GM12878 (cell line): ENCODE measurements at regions of chr1 and their contacts with region 1.

Region 1: DNA sequence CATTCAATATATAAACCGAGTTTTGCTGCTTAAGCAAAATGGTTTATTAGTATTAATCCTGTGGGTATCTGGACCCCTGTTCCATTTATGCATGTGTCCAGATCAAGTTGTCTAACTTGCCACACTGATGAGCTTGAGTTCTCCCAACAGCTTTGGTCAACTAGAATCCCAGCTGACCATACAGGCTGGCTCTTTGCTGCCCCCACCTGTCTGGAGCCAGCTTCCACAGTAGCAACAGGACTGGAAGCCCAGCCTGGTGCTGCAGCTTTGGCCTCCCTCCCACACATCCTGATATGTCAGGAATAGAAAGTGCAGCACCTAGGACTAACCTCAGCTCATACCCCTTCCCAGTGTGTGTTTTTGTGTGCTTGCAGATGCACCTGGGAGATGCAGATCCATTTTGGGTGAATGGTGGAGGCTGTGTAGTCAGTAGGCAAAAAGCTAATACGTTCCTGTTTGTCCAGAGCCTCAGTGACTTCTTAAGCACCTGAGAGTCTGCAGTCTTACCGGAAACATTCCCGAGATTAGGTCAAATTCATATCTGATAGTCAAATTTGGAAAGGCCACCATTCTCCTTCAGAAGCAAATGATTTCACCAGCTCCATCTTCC is 40.9 kb upstream of the BEND5 start:
- DNase-seq: no peak
- ATAC-seq: peak; percentile 83
- H3K4me3 ChIP-seq: no peak overlapping the region
- H3K27ac ChIP-seq: no peak overlapping the region
- H3K4me1 ChIP-seq: no peaks in the 10 kb centered on the region
- H3K27me3 ChIP-seq: no peaks in the 10 kb centered on the region
- CTCF ChIP-seq: peak; percentile 66 to 78 (median 77)
- EP300 ChIP-seq: no peak
- POLR2A ChIP-seq: no peak
- RAD21 ChIP-seq: peak; percentile 81

Region 2: GRCh38 chr1:48563021-48563420 is 254.6 kb before region 1 on chr1:
- CTCF ChIA-PET with region 1: no interaction called
- POLR2A ChIA-PET with region 1: no interaction called
- RAD21 ChIA-PET with region 1: no interaction called
- SMC1A ChIA-PET with region 1: no interaction called
- in situ Hi-C with region 1: no loop called
- intact Hi-C with region 1: no loop called
- DNase-seq: no peak
- ATAC-seq: no peak
- H3K4me3 ChIP-seq: no peak overlapping the region
- H3K27ac ChIP-seq: no peak overlapping the region
- H3K4me1 ChIP-seq: no peaks in the 10 kb centered on the region
- H3K27me3 ChIP-seq: no peaks in the 10 kb centered on the region
- CTCF ChIP-seq: no peak
- EP300 ChIP-seq: no peak
- POLR2A ChIP-seq: no peak
- RAD21 ChIP-seq: no peak

Region 3: DNA sequence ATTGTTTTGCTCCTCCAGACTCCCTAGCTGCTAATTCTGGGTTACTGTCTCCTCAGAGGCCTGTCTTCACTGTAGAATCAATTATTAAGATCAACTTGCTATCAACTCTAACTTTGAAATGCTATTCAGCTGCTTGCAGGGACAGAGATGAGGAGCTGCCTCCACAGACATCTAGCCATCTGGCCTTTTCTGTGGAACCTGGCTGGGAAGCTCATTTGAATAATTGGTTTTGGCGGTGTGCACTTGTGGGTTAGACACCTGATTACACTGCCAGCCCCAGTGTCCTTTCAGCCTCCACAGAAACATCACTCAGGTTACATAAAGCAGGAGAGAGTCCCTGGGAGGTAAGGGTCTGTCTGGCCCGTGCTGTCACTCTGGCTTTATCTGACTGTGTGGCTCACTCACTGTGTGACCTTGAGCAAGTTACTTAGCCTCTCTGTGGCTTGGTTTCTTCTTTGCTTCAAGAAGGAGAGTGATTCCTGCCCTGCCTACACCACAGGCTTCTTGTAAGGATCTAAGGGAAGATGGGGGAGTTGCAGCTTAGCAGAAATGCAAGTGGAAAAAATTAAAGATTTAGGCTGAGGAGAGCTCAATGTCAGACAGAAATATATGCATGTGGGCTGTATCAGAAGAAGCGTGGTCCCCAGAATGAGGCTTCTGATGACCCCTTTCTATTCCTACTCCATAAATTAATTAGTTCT is 172.6 kb before region 1 on chr1:
- CTCF ChIA-PET with region 1: no interaction called
- POLR2A ChIA-PET with region 1: no interaction called
- RAD21 ChIA-PET with region 1: no interaction called
- SMC1A ChIA-PET with region 1: no interaction called
- in situ Hi-C with region 1: no loop called
- intact Hi-C with region 1: no loop called
- DNase-seq: no peak
- ATAC-seq: no peak
- H3K4me3 ChIP-seq: no peak overlapping the region
- H3K27ac ChIP-seq: no peak overlapping the region
- H3K4me1 ChIP-seq: no peaks in the 10 kb centered on the region
- H3K27me3 ChIP-seq: no peaks in the 10 kb centered on the region; a peak in 1 of 4 replicates
- CTCF ChIP-seq: no peak
- EP300 ChIP-seq: no peak
- POLR2A ChIP-seq: no peak
- RAD21 ChIP-seq: no peak

Region 4: GRCh38 chr1:48697066-48697707 is 120.4 kb before region 1 on chr1:
- CTCF ChIA-PET with region 1: interaction called, 5 read pairs
- POLR2A ChIA-PET with region 1: no interaction called
- RAD21 ChIA-PET with region 1: interaction called, 4 read pairs
- SMC1A ChIA-PET with region 1: interaction called, 4 read pairs
- in situ Hi-C with region 1: no loop called
- intact Hi-C with region 1: loop called (anchors 1 kb)
- DNase-seq: no peak
- ATAC-seq: peak; percentile 85
- H3K4me3 ChIP-seq: no peak overlapping the region
- H3K27ac ChIP-seq: no peak overlapping the region
- H3K4me1 ChIP-seq: no peaks in the 10 kb centered on the region
- H3K27me3 ChIP-seq: no peaks in the 10 kb centered on the region
- CTCF ChIP-seq: peak; percentile 81 to 89 (median 87)
- EP300 ChIP-seq: no peak
- POLR2A ChIP-seq: no peak
- RAD21 ChIP-seq: peak; percentile 46

Region 5: GRCh38 chr1:48848035-48848434 is 30.4 kb after region 1 on chr1:
- CTCF ChIA-PET with region 1: no interaction called
- POLR2A ChIA-PET with region 1: no interaction called
- RAD21 ChIA-PET with region 1: no interaction called
- SMC1A ChIA-PET with region 1: no interaction called
- in situ Hi-C with region 1: no loop called
- intact Hi-C with region 1: no loop called
- DNase-seq: no peak
- ATAC-seq: no peak
- H3K4me3 ChIP-seq: no peak overlapping the region
- H3K27ac ChIP-seq: no peak overlapping the region
- H3K4me1 ChIP-seq: no peaks in the 10 kb centered on the region
- H3K27me3 ChIP-seq: no peaks in the 10 kb centered on the region
- CTCF ChIP-seq: no peak
- EP300 ChIP-seq: no peak
- POLR2A ChIP-seq: no peak
- RAD21 ChIP-seq: no peak